ENCODE measurements at regions of chr20 and their contacts with region 1.

Region 1: GRCh38 chr20:1437235-1437904 is 29.3 kb downstream of the NSFL1C start:
- DNase-seq: peak; percentile 84
- H3K4me3 Mint-ChIP-seq: no peak overlapping the region
- H3K27ac Mint-ChIP-seq: no peak overlapping the region
- H3K4me1 Mint-ChIP-seq: peaks cover 10% of the 10 kb centered on the region
- H3K27me3 Mint-ChIP-seq: no peaks in the 10 kb centered on the region
- CTCF ChIP-seq: peak; percentile 89

Region 2: DNA sequence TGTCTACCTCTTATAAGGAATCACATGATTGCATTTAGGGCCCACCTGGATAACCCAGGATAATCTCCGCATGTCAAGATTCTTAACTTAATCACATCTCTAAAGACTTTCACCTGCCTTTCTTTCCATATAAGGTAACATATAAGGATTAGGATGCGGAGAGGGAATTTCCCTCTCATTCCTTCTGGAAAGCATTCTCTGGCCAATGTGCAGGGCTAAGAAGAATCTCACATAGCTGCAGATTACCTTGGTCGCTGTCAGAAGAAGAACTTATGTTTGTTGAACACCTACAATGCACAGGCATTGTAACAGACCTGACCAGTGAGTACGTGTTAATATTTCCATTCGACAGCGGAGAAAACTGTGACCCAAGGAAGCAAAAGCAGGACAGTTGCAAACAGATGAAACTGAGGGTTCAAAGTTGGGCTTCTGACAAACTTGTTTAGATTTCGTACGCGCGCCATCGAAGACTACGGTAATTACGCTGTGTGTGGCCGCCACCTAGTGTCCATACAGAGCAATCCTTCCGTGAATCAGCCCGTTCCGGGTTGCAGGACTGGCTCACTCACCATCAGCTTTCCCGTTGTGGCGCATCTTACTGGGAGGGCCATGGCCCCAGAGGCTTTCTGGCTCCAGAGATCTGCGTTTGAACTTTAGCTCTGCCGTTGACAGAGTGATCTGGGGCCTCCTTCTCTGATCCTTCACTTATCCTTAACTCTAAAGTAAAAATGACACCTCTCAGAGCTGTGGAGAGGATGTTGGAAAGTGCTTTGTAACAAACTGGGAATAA is 224.6 kb before region 1 on chr20:
- CTCF ChIA-PET with region 1: no interaction called
- POLR2A ChIA-PET with region 1: no interaction called
- intact Hi-C with region 1: loop called (anchors 10 kb)
- DNase-seq: peak; percentile 74
- H3K4me3 Mint-ChIP-seq: no peak overlapping the region
- H3K27ac Mint-ChIP-seq: no peak overlapping the region
- H3K4me1 Mint-ChIP-seq: peaks cover 20% of the 10 kb centered on the region
- H3K27me3 Mint-ChIP-seq: peaks cover 58% of the 10 kb centered on the region
- CTCF ChIP-seq: peak; percentile 78

Region 3: GRCh38 chr20:1325173-1326030 is 112.0 kb before region 1 on chr20:
- CTCF ChIA-PET with region 1: interaction called, 14 read pairs
- POLR2A ChIA-PET with region 1: interaction called, 6 read pairs
- intact Hi-C with region 1: no loop called
- DNase-seq: peak; percentile 95
- H3K4me3 Mint-ChIP-seq: no peak overlapping the region
- H3K27ac Mint-ChIP-seq: no peak overlapping the region
- H3K4me1 Mint-ChIP-seq: peaks cover 26% of the 10 kb centered on the region
- H3K27me3 Mint-ChIP-seq: no peaks in the 10 kb centered on the region
- CTCF ChIP-seq: no peak

Region 4: DNA sequence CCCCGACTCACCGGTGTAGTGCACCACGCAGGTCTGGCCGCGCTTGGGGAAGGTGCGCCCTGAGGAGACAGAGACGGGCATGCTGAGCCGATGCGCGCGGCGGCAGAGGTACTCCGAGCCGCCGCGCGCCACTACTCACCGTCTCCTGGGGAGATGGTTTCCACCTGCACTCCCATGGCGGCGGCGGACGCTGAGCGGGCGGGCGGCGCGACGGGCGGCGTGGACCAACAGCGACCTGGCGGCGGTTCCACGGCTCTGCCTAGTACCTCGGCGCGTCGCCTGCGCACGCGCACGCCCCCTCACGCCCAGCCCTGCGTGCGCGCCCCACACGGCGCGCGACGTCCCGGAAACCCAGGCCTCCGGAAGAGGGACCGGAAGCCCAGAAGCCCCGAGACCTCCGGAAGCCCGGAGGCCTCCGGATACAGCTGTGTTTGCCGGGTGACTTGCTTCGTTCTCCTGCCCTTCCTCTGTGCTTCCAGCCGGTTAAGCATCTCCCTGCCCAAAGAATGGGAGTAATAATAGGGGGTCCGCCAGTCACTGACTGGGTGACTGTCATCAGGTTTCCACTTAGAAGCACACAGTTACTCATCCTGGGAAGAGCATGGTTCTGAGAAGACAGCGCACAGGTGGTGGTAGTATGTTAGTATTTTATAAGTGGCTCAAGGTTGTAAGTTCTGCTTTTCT is 44.4 kb before region 1 on chr20 and contains the start of gene FKBP1A:
- CTCF ChIA-PET with region 1: interaction called, 31 read pairs
- POLR2A ChIA-PET with region 1: interaction called, 4 read pairs
- intact Hi-C with region 1: loop called (anchors 5 kb)
- DNase-seq: peak; percentile 90
- H3K4me3 Mint-ChIP-seq: peak within 1 kb of the TSS; percentile 83
- H3K27ac Mint-ChIP-seq: peak within 1 kb of the TSS; percentile 91
- H3K4me1 Mint-ChIP-seq: peaks cover 31% of the 10 kb centered on the region
- H3K27me3 Mint-ChIP-seq: no peaks in the 10 kb centered on the region
- CTCF ChIP-seq: no peak
- total RNA-seq, gene FKBP1A: 209 and 217 TPM in 2 replicates

Region 5: DNA sequence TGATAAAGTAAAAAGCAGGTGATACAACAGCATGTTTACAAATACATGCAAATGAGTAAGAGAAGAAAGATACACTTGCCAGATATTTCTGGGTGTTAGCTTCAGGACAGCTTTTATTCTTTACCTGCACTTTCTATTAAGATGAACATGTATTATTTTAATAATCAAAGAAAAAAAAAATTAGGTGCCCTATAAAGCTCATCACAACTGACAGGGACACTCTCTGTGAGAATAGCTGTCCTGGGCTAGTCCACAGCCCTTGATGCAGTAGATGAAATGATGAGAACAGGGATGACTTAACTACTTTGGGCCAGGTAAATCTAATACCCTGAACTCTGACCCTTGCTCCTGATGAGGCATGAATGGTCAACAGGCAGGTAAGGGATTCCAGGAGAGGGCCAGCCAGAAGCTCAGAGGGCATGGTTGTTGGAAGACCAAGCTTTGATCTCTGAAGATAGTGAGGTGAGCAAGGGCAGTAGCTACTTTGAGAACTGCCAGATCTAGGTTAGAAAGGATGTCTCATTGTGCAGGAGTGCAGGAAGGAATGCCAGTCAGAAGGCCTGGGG is 13.6 kb after region 1 on chr20:
- CTCF ChIA-PET with region 1: interaction called, 90 read pairs
- POLR2A ChIA-PET with region 1: interaction called, 5 read pairs
- intact Hi-C with region 1: no loop called
- DNase-seq: no peak
- H3K4me3 Mint-ChIP-seq: no peak overlapping the region
- H3K27ac Mint-ChIP-seq: no peak overlapping the region
- H3K4me1 Mint-ChIP-seq: no peaks in the 10 kb centered on the region
- H3K27me3 Mint-ChIP-seq: no peaks in the 10 kb centered on the region
- CTCF ChIP-seq: no peak

Region 6: GRCh38 chr20:1466211-1467081 is 29.1 kb after region 1 on chr20 and contains the start of gene NSFL1C:
- CTCF ChIA-PET with region 1: interaction called, 8 read pairs
- POLR2A ChIA-PET with region 1: interaction called, 13 read pairs
- intact Hi-C with region 1: no loop called
- DNase-seq: peak; percentile 91
- H3K4me3 Mint-ChIP-seq: peak within 1 kb of the TSS; percentile 78
- H3K27ac Mint-ChIP-seq: peak within 1 kb of the TSS; percentile 66
- H3K4me1 Mint-ChIP-seq: peaks cover 38% of the 10 kb centered on the region
- H3K27me3 Mint-ChIP-seq: no peaks in the 10 kb centered on the region
- CTCF ChIP-seq: peak; percentile 99
- total RNA-seq, gene NSFL1C: 63.3 and 76.1 TPM in 2 replicates

Measured in MCF 10A (cell line).